Activated CD8-positive, alpha-beta memory T cell treated with anti-CD3 and anti-CD28 coated beads, Interleukin-2, amount 10 ng/mL, durations not matched to agents 7 days and 5 days (primary cell): ENCODE measurements at regions of chr11 and their contacts with region 1.

Region 1: GRCh38 chr11:128522055-128522942 is 65.1 kb downstream of the ETS1 start:
- DNase-seq: peak; percentile 95
- ATAC-seq: peak; percentile 79
- H3K4me3 Mint-ChIP-seq: peak overlapping the region; percentile 99
- H3K27ac Mint-ChIP-seq: peak overlapping the region; percentile 99
- H3K4me1 Mint-ChIP-seq: peaks cover 41% of the 10 kb centered on the region
- H3K27me3 Mint-ChIP-seq: no peaks in the 10 kb centered on the region

Region 2: GRCh38 chr11:128290106-128290840 is 232.0 kb before region 1 on chr11:
- CTCF ChIA-PET with region 1: interaction called, 18 read pairs
- DNase-seq: peak; percentile 86
- ATAC-seq: peak; percentile 70
- H3K4me3 Mint-ChIP-seq: peak overlapping the region; percentile 86
- H3K27ac Mint-ChIP-seq: peak overlapping the region; percentile 92
- H3K4me1 Mint-ChIP-seq: peaks cover 86% of the 10 kb centered on the region
- H3K27me3 Mint-ChIP-seq: no peaks in the 10 kb centered on the region

Region 3: GRCh38 chr11:128302425-128303186 is 219.7 kb before region 1 on chr11:
- CTCF ChIA-PET with region 1: interaction called, 15 read pairs
- DNase-seq: peak; percentile 88
- ATAC-seq: peak; percentile 91
- H3K4me3 Mint-ChIP-seq: peak overlapping the region; percentile 90
- H3K27ac Mint-ChIP-seq: peak overlapping the region; percentile 98
- H3K4me1 Mint-ChIP-seq: peaks cover 74% of the 10 kb centered on the region
- H3K27me3 Mint-ChIP-seq: no peaks in the 10 kb centered on the region

Region 4: DNA sequence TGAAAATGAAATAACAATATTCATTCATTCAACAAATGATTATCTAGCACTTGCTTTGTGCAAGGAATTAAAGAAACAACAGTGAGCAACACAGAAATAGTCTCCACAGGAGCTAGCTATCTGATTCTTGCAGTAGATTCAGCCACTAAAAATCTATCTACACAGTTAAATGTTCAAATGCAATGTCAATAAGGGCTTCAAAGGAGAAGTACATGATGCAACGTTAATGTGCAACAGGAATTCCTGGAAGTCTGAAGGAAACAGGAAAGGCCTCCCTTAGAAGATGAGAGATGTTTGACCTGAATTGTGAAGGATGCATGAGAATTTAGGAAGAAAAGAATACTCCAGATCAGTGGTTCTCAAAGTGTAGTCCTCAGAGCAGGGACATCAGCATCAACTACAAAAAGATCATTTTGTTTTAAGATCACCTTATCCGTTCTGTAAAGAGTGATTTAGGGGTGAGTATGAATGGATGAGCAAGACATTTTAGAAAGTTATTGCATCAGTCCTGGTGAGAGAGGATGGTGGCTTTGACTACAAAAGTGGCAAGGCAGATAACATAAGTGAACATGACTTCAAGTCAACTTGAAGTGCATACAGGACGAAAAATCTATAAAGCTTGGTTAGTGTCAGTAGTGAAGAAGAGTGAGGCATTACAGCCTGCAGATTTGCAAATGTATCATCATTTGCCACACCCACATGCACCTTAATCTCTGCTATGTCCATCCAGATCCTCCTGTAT is 30.9 kb before region 1 on chr11:
- CTCF ChIA-PET with region 1: interaction called, 108 read pairs
- DNase-seq: no peak
- ATAC-seq: no peak
- H3K4me3 Mint-ChIP-seq: peak overlapping the region; percentile 45
- H3K27ac Mint-ChIP-seq: peak overlapping the region; percentile 81
- H3K4me1 Mint-ChIP-seq: peaks cover 93% of the 10 kb centered on the region
- H3K27me3 Mint-ChIP-seq: no peaks in the 10 kb centered on the region

Region 5: DNA sequence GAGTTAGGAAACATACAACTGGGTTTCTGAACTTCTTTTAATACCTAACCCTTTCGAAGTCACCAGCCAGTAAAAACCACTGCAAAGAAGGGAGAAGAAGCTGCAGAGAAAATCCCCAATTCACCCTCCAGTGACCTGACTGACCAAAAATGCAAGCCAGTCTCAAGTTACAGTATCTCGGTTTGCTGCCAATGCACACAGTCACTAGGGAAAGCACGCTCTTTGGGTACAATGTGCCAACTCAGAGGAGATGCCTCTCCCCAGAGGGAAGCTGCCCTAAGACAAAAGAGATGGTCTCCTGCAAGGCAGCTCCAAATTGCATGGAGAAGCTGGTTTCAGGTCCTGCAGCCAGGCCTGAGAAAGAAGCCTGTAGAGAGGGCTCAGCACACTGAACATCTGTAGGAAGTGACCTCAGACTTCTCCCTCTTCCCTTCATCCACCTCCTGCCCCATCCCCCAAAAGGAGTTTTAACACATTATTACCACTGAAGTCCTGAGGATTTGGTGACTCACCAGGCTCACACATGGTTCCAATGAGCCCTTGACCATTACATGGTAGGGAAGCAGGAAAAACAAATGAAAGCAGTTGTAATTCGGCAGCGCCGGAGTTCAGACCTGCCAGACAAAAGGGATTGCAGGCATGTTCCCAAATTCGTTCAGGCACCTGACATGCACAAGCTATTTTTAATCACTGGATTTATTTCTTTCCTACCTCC is 25.1 kb before region 1 on chr11:
- CTCF ChIA-PET with region 1: interaction called, 108 read pairs
- DNase-seq: no peak
- ATAC-seq: no peak
- H3K4me3 Mint-ChIP-seq: peak overlapping the region; percentile 67
- H3K27ac Mint-ChIP-seq: peak overlapping the region; percentile 88
- H3K4me1 Mint-ChIP-seq: peaks cover 96% of the 10 kb centered on the region
- H3K27me3 Mint-ChIP-seq: no peaks in the 10 kb centered on the region

Region 6: GRCh38 chr11:128552783-128553661 is 30.7 kb after region 1 on chr11:
- CTCF ChIA-PET with region 1: interaction called, 20 read pairs
- DNase-seq: peak; percentile 57
- ATAC-seq: peak; percentile 12
- H3K4me3 Mint-ChIP-seq: peak overlapping the region; percentile 47
- H3K27ac Mint-ChIP-seq: peak overlapping the region; percentile 87
- H3K4me1 Mint-ChIP-seq: peaks cover 64% of the 10 kb centered on the region
- H3K27me3 Mint-ChIP-seq: no peaks in the 10 kb centered on the region

Region 7: GRCh38 chr11:128624269-128625175 is 102.2 kb after region 1 on chr11:
- CTCF ChIA-PET with region 1: interaction called, 44 read pairs
- DNase-seq: peak; percentile 78
- ATAC-seq: peak; percentile 62
- H3K4me3 Mint-ChIP-seq: peak overlapping the region; percentile 60
- H3K27ac Mint-ChIP-seq: peak overlapping the region; percentile 94
- H3K4me1 Mint-ChIP-seq: peaks cover 75% of the 10 kb centered on the region
- H3K27me3 Mint-ChIP-seq: no peaks in the 10 kb centered on the region